ENCODE measurements at regions of chr15 and their contacts with region 1.

Region 1: GRCh38 chr15:32089851-32090359 is 59.6 kb downstream of the CHRNA7 start:
- DNase-seq: no peak
- ATAC-seq: no peak
- H3K4me3 ChIP-seq: no peak overlapping the region
- H3K4me3 Mint-ChIP-seq: no peak overlapping the region
- H3K27ac ChIP-seq: no peak overlapping the region
- H3K27ac Mint-ChIP-seq: no peak overlapping the region
- H3K4me1 ChIP-seq: no peaks in the 10 kb centered on the region
- H3K4me1 Mint-ChIP-seq: no peaks in the 10 kb centered on the region
- H3K27me3 ChIP-seq: peaks cover 0 to 3% of the 10 kb centered on the region in 2 experiments
- H3K27me3 Mint-ChIP-seq: peaks cover 4% of the 10 kb centered on the region
- CTCF ChIP-seq: no peak

Region 2: DNA sequence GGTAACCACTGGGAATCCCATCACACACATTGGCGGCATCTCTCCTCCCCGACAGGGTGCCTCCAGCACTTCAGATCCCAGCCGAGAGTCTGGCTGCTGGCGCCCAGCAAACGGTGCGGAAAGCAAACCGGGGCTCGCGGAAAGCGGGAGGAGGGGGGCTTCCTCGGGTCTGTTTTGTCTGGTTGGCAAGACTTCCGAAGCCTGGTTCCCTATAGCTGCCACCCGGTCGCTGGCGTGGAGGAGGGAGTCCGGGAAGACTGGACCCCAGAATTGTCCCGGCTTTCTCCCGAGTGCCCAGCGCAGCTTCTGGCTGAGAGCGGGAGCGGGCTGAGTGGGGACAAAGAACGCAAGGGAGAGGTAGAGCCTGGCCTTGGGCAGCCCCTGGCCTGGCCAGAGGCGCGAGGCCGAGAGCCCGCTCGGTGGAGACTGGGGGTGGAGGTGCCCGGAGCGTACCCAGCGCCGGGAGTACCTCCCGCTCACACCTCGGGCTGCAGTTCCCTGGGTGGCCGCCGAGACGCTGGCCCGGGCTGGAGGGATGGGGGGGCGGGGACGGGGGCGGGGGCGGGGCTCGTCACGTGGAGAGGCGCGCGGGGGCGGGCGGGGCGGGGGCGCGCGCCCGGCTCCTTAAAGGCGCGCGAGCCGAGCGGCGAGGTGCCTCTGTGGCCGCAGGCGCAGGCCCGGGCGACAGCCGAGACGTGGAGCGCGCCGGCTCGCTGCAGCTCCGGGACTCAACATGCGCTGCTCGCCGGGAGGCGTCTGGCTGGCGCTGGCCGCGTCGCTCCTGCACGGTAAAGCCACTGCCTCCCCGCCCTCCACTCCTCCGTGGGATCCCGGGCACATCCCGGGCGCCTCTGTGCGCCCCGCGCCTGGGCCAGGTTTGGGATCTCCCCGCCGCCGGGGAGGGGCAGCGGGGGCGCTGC is 59.8 kb before region 1 on chr15 and contains the start of gene CHRNA7:
- CTCF ChIA-PET with region 1: no interaction called
- POLR2A ChIA-PET with region 1: no interaction called
- intact Hi-C with region 1: loop called in 1 of 2 experiments (anchors 10 kb)
- DNase-seq: peak in 4 of 14 experiments; percentile 5 to 20 (median 10)
- ATAC-seq: peak; percentile 41
- H3K4me3 ChIP-seq: no peak within 1 kb of the TSS
- H3K4me3 Mint-ChIP-seq: peak within 1 kb of the TSS; percentile 57
- H3K27ac ChIP-seq: no peak within 1 kb of the TSS
- H3K27ac Mint-ChIP-seq: no peak within 1 kb of the TSS
- H3K4me1 ChIP-seq: peaks cover 10% of the 10 kb centered on the region
- H3K4me1 Mint-ChIP-seq: peaks cover 8% of the 10 kb centered on the region
- H3K27me3 ChIP-seq: peaks cover 42 to 54% of the 10 kb centered on the region in 2 experiments
- H3K27me3 Mint-ChIP-seq: peaks cover 81% of the 10 kb centered on the region
- CTCF ChIP-seq: no peak
- total RNA-seq, gene CHRNA7: not detected